Sigmoid colon (tissue), 7 donors: ENCODE measurements at regions of chr4 and their contacts with region 1.

Region 1: DNA sequence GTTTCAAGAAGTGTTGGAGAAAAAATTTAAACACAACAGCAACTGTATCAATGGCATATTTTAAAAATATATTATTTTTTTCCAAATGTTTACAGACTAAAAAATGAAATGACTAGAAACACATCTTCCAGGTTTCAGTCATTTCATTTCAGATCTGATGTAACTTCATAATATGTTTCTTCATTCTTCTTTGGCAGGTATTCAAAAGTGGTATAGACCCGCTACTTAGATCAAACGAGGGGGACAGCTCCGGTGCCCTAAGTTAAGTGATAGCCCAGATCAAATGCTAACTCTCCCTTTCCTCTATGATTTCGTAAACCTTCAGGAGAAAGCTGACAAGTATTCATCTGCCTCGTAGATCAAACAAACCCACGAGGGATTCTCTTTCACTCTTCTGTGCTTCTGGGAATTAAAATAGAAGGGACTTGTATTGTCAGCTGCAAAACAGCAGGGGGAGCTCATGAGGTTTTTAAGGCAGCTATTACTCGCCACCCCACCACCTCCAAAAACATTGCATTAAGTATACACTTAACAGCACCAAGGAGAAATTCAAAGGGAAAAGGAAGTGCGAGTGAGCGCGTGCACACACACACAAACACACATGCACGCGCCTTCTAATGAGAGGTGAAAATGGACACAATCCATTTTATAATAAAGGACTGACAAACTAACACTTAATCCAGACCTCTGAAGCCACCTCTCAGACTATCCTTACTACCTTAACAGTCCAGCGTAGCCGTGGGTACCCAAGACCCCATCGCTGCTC is 21.4 kb downstream of the HELT start:
- DNase-seq: peak; percentile 71
- H3K4me3 ChIP-seq: no peak overlapping the region
- H3K27ac ChIP-seq: no peak overlapping the region
- H3K4me1 ChIP-seq: peaks cover 0 to 6% (median 2%) of the 10 kb centered on the region in 4 donors
- H3K27me3 ChIP-seq: no peaks in the 10 kb centered on the region
- CTCF ChIP-seq: peak; percentile 64 to 78 (median 73)
- EP300 ChIP-seq: no peak
- POLR2A ChIP-seq: no peak

Region 2: DNA sequence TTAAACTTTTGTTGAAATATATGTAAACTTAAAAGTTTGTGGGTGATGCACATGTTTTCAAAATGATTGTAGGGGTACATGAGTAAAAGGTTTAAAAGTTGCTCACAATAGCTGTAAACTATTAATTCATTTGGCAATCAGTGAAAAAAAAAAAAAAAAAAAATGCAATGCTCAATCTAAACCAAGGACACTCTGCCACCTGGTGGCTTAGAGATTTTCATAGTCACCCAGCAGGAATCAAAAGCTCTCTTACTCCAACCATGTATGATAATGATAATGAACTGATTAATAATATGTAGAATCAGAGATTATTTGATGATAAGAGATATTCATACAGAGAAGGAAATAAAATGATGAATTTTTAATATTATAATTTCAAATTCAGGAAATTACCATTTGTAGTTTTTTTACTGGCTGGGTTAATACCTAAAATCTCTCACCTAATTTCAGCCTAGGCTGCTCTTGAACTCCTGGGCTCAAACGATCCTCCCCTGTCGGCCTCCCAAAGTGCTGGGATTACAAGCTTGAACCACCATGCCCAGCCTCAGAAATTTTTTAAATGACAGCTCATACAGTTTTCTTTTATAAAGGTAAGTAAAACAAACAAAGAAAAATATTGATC is 56.5 kb after region 1 on chr4:
- intact Hi-C with region 1: loop called (anchors 5 kb)
- DNase-seq: no peak
- H3K4me3 ChIP-seq: no peak overlapping the region
- H3K27ac ChIP-seq: no peak overlapping the region
- H3K4me1 ChIP-seq: no peaks in the 10 kb centered on the region
- H3K27me3 ChIP-seq: peaks cover 0 to 10% (median 0%) of the 10 kb centered on the region in 3 donors
- CTCF ChIP-seq: peak in 3 of 4 experiments; percentile 37 to 47 (median 45)
- EP300 ChIP-seq: no peak
- POLR2A ChIP-seq: no peak

Region 3: DNA sequence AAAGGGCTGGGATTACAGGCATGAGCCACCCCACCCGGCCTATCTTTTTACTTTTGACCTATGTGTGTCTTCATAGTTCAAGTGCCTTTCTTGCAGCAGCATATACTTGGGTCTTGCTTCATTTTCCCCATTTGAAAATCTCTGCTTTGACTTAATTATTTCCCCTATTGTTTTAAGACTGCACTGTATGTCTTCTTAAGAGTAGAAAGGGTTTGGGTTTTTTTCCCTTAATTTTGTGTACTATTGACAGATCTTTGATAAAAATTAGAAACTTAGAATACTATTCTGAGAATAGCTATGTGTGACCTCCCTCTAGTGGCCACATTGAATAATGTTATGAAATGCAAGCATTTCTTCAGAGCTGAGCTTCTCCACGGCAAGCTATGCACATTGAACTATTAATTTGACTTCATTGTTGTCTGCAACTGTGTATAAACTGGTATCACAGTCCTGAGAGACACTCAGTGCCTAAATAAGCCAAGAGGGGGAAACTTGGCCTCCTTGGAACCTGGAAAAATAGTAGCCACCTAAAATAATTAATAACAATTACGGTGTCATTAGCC is 94.7 kb after region 1 on chr4:
- intact Hi-C with region 1: loop called (anchors 1 kb)
- DNase-seq: no peak
- H3K4me3 ChIP-seq: no peak overlapping the region
- H3K27ac ChIP-seq: no peak overlapping the region
- H3K4me1 ChIP-seq: no peaks in the 10 kb centered on the region
- H3K27me3 ChIP-seq: no peaks in the 10 kb centered on the region
- CTCF ChIP-seq: peak; percentile 53 to 71 (median 70)
- EP300 ChIP-seq: no peak
- POLR2A ChIP-seq: no peak

Region 4: GRCh38 chr4:185183619-185184281 is 144.1 kb after region 1 on chr4:
- intact Hi-C with region 1: loop called (anchors 2 kb)
- DNase-seq: peak; percentile 92
- H3K4me3 ChIP-seq: no peak overlapping the region
- H3K27ac ChIP-seq: peak overlapping the region in 1 of 4 donors; percentile 4
- H3K4me1 ChIP-seq: peaks cover 0 to 28% (median 5%) of the 10 kb centered on the region in 4 donors
- H3K27me3 ChIP-seq: no peaks in the 10 kb centered on the region
- CTCF ChIP-seq: peak; percentile 42 to 75 (median 64)
- EP300 ChIP-seq: no peak
- POLR2A ChIP-seq: no peak